Activated CD8-positive, alpha-beta T cell treated with anti-CD3 and anti-CD28 coated beads, Interleukin-2, amount 10 ng/mL, durations not matched to agents 7 days and 5 days (primary cell): ENCODE measurements at regions of chr5 and their contacts with region 1.

Region 1: DNA sequence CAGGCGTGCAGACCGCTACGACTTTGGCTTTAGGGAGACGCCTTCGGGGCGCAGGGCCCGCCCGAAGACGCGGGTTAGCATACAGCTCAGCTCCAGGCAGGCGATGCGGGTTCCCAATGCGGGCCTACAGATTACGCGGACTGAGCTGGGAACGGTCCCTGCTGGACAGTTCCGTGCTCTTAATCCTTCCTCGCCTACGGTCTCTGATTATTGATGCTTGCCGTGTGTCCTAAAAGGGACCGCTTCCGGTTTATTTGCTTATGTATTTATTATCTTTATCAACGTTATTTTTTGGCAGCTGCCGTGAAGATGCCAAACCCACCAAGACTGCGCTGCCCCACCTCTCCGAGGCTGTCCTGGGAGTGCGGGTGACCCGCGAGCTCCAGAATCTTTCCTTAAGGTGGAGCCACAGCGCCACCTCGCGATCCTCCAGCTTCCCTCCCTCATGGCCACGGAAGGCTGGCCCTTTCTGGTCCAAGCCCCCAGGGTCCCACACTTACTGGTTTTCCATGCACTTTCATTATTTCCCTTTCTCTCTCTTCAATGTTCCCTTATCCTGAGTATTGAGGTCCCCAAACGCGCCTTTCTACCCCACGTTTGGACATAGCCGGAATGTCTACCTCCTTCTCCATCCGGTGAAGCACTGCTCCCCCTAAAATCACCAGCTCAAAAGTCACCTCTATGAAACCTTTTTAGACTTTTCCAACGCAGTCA is 7.0 kb upstream of the EBF1 start:
- DNase-seq: peak; percentile 73
- ATAC-seq: peak; percentile 90
- H3K4me3 Mint-ChIP-seq: peak overlapping the region; percentile 66
- H3K27ac Mint-ChIP-seq: no peak overlapping the region
- H3K4me1 Mint-ChIP-seq: peaks cover 19% of the 10 kb centered on the region
- H3K27me3 Mint-ChIP-seq: peaks cover 65% of the 10 kb centered on the region

Region 2: DNA sequence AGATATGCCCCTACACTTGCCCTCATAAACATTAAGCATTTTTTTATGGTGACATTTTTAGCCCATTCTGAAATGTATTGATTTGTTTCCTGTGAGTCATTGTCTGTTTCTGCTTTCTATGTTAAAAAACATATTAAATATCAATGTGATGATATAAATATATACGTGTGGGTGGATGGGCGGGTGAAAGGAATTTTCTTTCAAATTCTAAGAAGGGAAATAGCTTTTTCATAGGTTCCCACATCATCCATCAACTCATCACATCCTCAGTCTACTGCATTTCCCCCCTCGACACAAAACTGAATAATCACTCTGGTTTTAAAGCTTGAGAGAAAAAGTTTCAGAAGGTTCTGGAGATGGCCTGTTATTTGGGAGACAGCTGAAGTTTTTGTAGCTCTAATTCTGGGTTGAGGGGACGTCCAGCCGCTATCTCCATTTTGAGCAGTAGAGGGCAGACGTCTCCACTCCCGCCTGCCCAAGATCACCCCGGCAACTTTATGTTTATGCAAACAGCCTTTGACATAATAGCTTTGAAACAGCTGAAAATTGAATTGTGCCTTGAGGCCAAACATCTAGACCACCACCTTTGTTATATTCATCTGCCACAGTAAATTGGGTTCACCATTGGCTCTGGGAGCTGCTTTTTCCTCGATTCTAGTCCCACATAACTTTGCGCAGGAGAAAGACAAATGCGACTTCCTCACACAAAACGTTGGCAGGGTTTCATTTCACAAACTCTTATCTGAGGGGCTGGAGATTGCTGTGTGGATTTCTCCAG is 1031.5 kb before region 1 on chr5:
- CTCF ChIA-PET with region 1: interaction called, 30 read pairs
- POLR2A ChIA-PET with region 1: no interaction called
- DNase-seq: peak; percentile 63
- ATAC-seq: peak; percentile 81
- H3K4me3 Mint-ChIP-seq: no peak overlapping the region
- H3K27ac Mint-ChIP-seq: no peak overlapping the region
- H3K4me1 Mint-ChIP-seq: no peaks in the 10 kb centered on the region
- H3K27me3 Mint-ChIP-seq: peaks cover 10% of the 10 kb centered on the region

Region 3: GRCh38 chr5:158174918-158175851 is 931.5 kb before region 1 on chr5:
- CTCF ChIA-PET with region 1: interaction called, 55 read pairs
- POLR2A ChIA-PET with region 1: no interaction called
- DNase-seq: peak; percentile 69
- ATAC-seq: peak; percentile 64
- H3K4me3 Mint-ChIP-seq: no peak overlapping the region
- H3K27ac Mint-ChIP-seq: no peak overlapping the region
- H3K4me1 Mint-ChIP-seq: no peaks in the 10 kb centered on the region
- H3K27me3 Mint-ChIP-seq: no peaks in the 10 kb centered on the region

Region 4: DNA sequence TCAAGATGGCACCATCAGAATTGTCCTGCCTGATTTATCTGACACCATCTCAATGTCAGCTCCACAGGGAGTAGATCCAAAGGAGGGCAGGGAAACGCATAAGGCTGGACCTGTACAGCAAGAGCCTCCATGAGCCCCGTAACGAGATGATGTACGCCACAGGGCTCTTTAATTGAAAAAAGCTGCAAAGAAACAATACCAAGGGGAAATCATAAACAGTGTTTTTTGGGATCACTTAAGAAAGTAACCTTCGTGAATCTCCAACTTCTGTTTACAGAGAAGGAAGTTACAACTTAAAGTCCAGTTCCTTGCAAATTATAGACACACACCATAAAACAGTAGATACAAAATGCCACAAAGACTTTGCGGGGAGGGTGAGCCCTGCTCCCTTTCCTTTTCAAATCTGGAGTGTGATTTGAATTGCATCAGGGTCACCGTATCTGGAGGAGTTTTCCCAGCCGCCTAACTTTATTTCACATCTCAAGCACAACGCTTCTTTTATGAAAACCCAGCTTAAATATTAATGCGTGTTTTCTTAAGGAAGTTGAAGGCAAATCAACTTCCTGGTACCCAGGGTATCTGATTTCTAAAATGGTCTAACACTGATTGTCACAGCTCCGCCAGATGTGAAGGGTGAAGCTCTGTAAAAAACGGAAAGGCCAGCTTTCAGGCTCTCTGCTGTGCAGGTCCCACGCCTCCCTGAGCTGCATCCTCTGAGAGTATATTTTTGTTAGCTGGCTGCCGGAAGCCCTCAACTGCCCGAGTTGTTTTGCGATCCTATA is 95.9 kb before region 1 on chr5:
- CTCF ChIA-PET with region 1: no interaction called
- POLR2A ChIA-PET with region 1: no interaction called
- DNase-seq: no peak
- ATAC-seq: no peak
- H3K4me3 Mint-ChIP-seq: no peak overlapping the region
- H3K27ac Mint-ChIP-seq: no peak overlapping the region
- H3K4me1 Mint-ChIP-seq: peaks cover 6% of the 10 kb centered on the region
- H3K27me3 Mint-ChIP-seq: peaks cover 14% of the 10 kb centered on the region

Region 5: GRCh38 chr5:159073026-159073425 is 33.7 kb before region 1 on chr5:
- CTCF ChIA-PET with region 1: no interaction called
- POLR2A ChIA-PET with region 1: no interaction called
- DNase-seq: no peak
- ATAC-seq: no peak
- H3K4me3 Mint-ChIP-seq: no peak overlapping the region
- H3K27ac Mint-ChIP-seq: no peak overlapping the region
- H3K4me1 Mint-ChIP-seq: peaks cover 4% of the 10 kb centered on the region
- H3K27me3 Mint-ChIP-seq: peaks cover 27% of the 10 kb centered on the region

Region 6: GRCh38 chr5:159094745-159095144 is 12.0 kb before region 1 on chr5:
- CTCF ChIA-PET with region 1: interaction called, 20 read pairs
- POLR2A ChIA-PET with region 1: no interaction called
- DNase-seq: peak; percentile 77
- ATAC-seq: no peak
- H3K4me3 Mint-ChIP-seq: no peak overlapping the region
- H3K27ac Mint-ChIP-seq: no peak overlapping the region
- H3K4me1 Mint-ChIP-seq: peaks cover 31% of the 10 kb centered on the region
- H3K27me3 Mint-ChIP-seq: peaks cover 34% of the 10 kb centered on the region

Region 7: DNA sequence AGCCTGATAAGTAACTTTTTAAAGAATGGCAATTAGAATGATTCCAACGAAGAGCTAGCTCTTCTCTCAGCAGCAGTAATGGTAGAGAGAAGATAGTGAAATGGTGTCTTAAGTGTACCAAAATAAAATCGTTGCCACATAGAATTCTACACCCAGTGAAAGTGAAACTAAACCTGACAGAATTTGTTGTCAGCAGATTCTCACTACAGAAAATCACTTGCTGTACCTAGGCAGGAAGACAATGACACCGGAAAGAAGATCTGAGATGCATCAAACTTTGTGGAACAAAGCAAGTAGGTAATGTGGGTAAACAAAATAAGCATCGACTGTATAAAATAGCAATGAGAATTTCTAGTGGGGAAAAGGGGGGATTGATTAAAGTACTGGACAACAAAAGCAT is 13.7 kb after region 1 on chr5:
- CTCF ChIA-PET with region 1: interaction called, 11 read pairs
- POLR2A ChIA-PET with region 1: interaction called, 3 read pairs
- DNase-seq: no peak
- ATAC-seq: peak; percentile 93
- H3K4me3 Mint-ChIP-seq: peak overlapping the region; percentile 58
- H3K27ac Mint-ChIP-seq: peak overlapping the region; percentile 87
- H3K4me1 Mint-ChIP-seq: peaks cover 18% of the 10 kb centered on the region
- H3K27me3 Mint-ChIP-seq: no peaks in the 10 kb centered on the region

Region 8: GRCh38 chr5:159128070-159128541 is 21.4 kb after region 1 on chr5:
- CTCF ChIA-PET with region 1: interaction called, 30 read pairs
- POLR2A ChIA-PET with region 1: no interaction called
- DNase-seq: no peak
- ATAC-seq: no peak
- H3K4me3 Mint-ChIP-seq: no peak overlapping the region
- H3K27ac Mint-ChIP-seq: no peak overlapping the region
- H3K4me1 Mint-ChIP-seq: no peaks in the 10 kb centered on the region
- H3K27me3 Mint-ChIP-seq: peaks cover 10% of the 10 kb centered on the region

Region 9: DNA sequence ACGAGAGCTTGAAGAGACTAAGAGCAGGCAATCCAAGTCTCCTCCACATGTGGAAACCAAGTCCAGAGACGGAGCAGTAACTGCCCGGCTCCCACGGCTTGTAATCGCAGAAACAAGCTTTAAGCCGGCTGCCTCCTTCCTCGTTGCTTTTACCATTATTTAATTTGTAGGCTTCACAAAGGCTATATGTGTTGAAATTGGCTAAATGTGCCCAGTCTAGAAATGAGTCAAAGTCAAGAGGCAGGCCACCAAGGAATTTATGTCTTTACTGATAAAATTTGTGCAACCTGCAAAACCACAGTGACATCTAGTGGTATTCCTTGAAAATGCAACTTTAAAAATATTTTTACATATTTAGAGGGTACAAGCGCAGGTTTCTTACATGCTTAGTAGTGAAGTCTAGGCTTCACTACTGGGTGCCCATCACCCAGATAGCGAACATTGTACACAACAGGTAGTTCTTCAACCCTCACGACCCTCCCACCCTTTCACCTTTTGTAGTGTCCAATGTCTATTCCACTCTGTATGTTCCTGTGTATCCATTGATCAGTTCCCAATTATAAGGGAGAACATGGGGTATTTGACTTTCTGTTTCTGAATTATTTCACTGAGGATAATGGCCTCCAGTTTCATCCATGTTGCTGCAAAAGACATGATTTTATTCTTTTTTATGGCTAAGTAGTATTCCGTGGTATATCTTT is 26.5 kb after region 1 on chr5:
- CTCF ChIA-PET with region 1: interaction called, 30 read pairs
- POLR2A ChIA-PET with region 1: no interaction called
- DNase-seq: no peak
- ATAC-seq: peak; percentile 49
- H3K4me3 Mint-ChIP-seq: no peak overlapping the region
- H3K27ac Mint-ChIP-seq: no peak overlapping the region
- H3K4me1 Mint-ChIP-seq: no peaks in the 10 kb centered on the region
- H3K27me3 Mint-ChIP-seq: peaks cover 7% of the 10 kb centered on the region